ENCODE measurements at regions of chr22 and their contacts with region 1.

Region 1: GRCh38 chr22:19178656-19179496 is at the start of gene SLC25A1:
- DNase-seq: peak; percentile 93
- H3K4me3 ChIP-seq: peak within 1 kb of the TSS; percentile 88
- H3K27ac ChIP-seq: peak within 1 kb of the TSS; percentile 63
- H3K4me1 ChIP-seq: peaks cover 70% of the 10 kb centered on the region
- CTCF ChIP-seq: no peak
- total RNA-seq, gene SLC25A1: 52.4 and 59.5 TPM in 2 replicates

Region 2: DNA sequence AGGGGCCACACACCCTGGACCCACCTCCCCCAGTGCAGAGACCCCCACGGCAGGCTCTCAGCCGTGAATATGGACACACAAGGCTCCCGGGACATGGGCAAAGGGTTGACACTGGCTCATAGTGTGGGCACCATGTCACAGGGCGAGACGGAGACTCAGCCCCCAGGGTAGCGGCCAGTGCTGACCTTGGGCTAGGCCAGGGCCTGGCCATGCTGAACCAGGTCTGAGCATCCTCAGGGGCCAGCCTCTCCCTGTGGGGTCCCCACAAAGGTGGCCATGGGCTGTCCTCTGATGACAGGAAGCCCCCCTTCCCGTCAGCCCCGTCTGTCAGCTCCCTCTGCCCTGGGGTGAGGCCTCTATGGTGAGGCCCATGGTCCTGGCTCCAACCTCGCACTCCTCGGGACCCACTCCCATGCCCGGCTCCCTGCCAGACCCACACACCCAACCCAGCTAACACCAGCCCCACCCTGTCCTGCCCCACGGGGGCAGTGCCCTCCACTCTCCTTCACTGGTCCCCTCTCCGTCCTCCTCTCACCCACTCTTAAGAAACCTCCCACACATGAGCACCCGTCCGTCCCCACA is 223.8 kb before region 1 on chr22:
- CTCF ChIA-PET with region 1: interaction called, 12 read pairs
- POLR2A ChIA-PET with region 1: no interaction called
- intact Hi-C with region 1: no loop called
- DNase-seq: no peak
- H3K4me3 ChIP-seq: no peak overlapping the region
- H3K27ac ChIP-seq: no peak overlapping the region
- H3K4me1 ChIP-seq: no peaks in the 10 kb centered on the region
- CTCF ChIP-seq: no peak

Region 3: DNA sequence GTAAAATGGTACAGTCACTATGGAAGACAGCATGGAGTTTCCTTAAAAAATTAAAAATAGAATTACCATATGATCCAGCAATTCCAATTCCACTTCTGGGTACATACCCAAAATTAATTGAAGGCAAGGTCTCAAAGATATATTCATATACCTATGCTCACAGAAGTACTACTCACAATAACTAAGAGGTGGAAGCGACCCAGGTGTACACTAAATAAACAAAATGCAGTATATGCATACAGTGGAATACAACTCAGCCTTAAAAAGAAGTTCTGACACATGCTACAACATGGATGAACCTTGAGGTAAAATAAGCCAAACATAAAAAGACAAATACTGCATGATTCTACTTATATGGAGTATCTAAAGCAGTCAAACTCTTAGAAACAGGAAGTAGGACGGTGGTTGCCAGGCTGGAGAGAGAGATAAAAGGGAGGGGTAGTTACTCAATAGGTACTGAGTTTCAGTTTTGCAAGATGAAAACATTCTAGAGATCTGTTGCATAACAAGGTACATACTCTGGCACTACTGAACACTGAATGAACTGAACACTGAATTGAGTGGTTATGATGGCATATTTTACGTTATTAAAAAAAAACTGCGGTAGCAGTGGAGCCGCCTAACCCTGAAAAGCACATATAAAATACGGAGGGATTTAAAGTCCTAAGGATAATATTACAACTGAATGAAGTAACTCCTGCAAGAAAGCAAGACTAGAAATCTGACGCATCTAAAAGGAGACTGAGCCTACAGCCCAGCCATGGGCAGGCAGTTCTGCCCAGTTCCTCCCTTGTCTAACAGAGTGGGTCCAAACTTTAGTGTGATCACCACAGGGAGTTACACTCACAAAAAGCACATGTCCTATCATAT is 69.4 kb before region 1 on chr22:
- CTCF ChIA-PET with region 1: no interaction called
- POLR2A ChIA-PET with region 1: no interaction called
- intact Hi-C with region 1: no loop called
- DNase-seq: peak; percentile 75
- H3K4me3 ChIP-seq: peak overlapping the region; percentile 40
- H3K27ac ChIP-seq: peak overlapping the region; percentile 19
- H3K4me1 ChIP-seq: peaks cover 28% of the 10 kb centered on the region
- CTCF ChIP-seq: no peak

Region 4: DNA sequence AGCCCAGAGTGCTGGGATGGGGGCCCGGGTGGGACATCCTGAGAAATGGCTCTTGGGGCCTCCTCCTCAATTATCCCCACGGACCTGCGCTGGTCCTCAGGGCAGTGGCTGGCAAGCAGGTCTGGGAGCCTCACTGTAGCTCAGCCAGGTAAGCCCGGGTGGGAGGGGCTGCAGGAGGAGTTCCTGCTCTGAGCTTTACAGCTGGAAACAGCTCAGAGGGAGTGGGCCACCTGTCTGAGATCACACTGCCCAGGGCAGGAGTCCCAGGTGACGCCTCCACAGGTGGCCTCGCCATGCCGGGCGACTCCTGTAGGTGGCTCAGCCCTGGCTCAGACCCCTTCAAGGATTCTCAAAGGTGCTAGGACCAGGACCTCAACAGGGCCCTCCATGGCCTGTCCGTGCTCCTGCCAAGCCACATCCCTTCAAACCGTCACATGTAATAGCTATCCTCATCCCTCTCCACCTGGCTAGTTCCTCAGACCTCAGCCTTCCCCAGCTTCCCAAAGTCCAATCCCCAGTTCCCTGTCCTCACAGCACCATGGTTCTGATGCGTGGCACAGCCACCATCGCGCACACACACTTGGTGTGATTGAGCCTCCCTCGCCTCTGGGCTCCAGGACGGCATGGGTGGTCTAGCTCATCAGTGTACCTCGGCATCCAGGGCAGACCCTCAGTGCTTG is 51.4 kb before region 1 on chr22:
- CTCF ChIA-PET with region 1: no interaction called
- POLR2A ChIA-PET with region 1: no interaction called
- intact Hi-C with region 1: no loop called
- DNase-seq: no peak
- H3K4me3 ChIP-seq: no peak overlapping the region
- H3K27ac ChIP-seq: no peak overlapping the region
- H3K4me1 ChIP-seq: peaks cover 16% of the 10 kb centered on the region
- CTCF ChIP-seq: no peak

Region 5: DNA sequence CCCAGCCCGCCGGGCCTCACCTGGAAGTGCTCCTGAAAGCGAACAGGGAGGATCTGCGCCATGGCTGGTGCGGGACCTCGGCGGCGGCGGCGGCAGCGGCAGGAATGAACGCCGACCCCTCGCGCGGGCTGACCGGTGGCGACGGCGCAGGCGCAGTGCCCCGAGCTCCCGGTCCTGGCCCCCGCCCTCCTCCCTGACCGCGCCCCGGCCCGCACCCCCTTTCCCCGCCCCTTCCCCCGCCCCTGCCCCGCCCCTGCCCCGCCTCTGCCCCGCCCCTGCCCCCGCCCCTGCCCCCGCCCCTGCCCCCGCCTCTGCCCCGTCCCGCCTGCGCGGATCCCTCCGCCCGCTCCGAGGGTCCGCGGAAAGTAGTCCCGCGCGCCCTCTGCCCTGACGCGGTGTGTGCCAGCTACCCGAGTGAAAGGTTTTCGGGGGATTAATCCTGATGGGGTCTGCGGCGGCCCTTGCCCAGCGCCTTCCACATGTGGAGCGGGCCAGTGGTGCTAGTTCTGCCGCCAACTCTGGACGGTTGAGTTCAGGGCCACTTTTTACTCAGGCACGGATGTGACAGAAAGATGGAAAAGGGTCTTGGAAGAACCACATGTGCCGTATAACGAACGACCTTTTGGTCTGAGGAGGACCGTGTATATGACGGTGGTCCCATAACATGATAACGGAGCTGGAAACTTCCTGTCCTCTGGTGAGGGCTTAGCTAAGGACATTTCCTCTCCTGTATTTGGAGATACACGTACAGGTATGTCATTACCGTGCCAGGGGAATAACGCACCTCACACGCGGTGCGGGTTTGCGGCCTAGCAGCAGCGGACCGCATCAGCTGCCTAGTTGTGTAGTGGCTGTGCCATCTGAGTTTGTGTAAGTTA is 112.9 kb after region 1 on chr22 and contains the start of gene CLTCL1:
- CTCF ChIA-PET with region 1: interaction called, 4 read pairs
- POLR2A ChIA-PET with region 1: no interaction called
- intact Hi-C with region 1: loop called (anchors 5 kb)
- DNase-seq: peak; percentile 82
- H3K4me3 ChIP-seq: peak within 1 kb of the TSS; percentile 74
- H3K27ac ChIP-seq: no peak within 1 kb of the TSS
- H3K4me1 ChIP-seq: peaks cover 16% of the 10 kb centered on the region
- CTCF ChIP-seq: no peak
- total RNA-seq, gene CLTCL1: 0.31 and 0.44 TPM in 2 replicates

Measured in OCI-LY7 (cell line).